ENCODE measurements at regions of chr11 and their contacts with region 1.

Region 1: DNA sequence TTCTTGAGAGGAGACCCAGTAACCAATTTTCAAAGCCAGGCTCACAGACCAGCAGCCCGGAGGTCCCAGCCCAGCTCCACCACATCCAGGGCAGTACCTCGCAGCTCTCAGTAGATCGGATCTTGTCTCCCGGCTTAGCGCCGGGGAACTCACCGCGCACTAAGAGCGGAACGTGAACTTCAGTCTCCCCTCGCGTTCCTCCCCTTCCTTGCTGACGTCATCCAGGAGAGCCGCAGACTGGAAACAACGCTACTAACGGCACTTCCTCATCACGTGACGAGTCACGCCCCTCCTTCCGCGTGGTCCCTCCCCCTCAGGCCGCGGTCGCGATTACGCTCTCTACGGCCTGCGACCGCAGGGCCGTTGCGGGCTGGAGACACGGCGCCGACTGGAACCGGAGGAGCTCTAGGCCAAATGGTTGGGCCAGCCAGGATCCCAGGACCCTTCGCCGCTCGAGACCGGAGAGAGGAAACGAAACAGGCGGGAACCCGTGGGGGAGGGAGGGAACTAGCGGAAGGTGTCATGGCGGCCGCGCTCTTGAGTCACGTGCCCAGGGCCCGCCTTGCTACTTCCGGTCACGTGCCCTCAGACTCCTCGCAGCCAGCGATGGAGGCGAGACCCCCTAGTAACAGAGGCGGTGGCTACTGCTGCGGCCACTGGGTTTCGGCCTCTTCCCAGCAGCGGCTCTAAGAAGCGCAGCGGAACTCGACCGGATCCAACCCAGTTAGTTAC is at the starts of genes GTF2H1 and HPS5:
- DNase-seq: peak; percentile 99
- ATAC-seq: peak; percentile 88
- H3K4me3 Mint-ChIP-seq: peak within 1 kb of the TSS; percentile 97
- H3K27ac Mint-ChIP-seq: peak within 1 kb of the TSS; percentile 100
- H3K4me1 Mint-ChIP-seq: peaks cover 66% of the 10 kb centered on the region
- H3K27me3 Mint-ChIP-seq: no peaks in the 10 kb centered on the region
- total RNA-seq, gene GTF2H1: 40.0 to 47.7 TPM
- total RNA-seq, gene HPS5: 19.3 to 19.8 TPM

Region 2: DNA sequence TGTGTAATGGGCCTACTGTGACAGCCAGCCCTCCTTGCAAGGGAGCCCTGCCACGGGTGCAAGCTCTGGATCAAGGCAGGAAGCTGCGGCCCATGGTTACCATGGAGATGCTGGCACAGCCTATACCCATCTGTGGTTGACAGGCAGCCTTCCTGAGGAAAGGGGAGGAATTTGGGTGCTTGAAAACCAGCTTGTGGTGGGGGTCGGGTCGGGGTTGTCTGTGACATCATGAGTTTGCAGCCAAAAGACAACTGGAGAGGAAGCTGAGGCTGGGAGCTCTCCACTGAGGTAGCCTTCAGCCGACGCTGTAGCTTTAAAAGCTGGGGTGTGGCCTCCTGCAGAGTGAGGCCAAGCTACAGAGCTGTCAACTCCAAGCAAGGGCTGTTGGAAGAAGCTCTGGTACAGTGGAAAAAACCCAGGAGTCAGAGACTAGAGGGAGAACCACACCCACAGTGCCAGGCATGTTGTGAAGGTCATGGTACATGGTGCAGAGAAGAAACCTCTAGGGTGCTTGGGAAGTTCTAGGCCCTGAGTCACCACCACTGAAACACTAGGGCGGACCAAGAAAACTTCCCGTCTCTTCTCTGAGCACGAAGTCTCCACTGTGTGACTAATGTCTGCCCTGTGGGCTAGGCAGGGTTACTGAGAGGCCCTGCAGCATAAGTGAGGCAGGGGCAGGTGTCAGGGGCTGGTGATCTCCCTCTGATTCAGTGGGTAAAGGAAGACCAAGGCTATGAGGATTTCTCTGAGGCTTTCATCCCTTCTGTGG is 61.4 kb after region 1 on chr11:
- CTCF ChIA-PET with region 1: interaction called, 13 read pairs
- DNase-seq: peak; percentile 82
- ATAC-seq: peak; percentile 87
- H3K4me3 Mint-ChIP-seq: peak overlapping the region; percentile 38
- H3K27ac Mint-ChIP-seq: peak overlapping the region; percentile 96
- H3K4me1 Mint-ChIP-seq: peaks cover 48% of the 10 kb centered on the region
- H3K27me3 Mint-ChIP-seq: no peaks in the 10 kb centered on the region